Tibial artery (tissue), 4 donors: ENCODE measurements at regions of chr13 and their contacts with region 1.

Region 1: DNA sequence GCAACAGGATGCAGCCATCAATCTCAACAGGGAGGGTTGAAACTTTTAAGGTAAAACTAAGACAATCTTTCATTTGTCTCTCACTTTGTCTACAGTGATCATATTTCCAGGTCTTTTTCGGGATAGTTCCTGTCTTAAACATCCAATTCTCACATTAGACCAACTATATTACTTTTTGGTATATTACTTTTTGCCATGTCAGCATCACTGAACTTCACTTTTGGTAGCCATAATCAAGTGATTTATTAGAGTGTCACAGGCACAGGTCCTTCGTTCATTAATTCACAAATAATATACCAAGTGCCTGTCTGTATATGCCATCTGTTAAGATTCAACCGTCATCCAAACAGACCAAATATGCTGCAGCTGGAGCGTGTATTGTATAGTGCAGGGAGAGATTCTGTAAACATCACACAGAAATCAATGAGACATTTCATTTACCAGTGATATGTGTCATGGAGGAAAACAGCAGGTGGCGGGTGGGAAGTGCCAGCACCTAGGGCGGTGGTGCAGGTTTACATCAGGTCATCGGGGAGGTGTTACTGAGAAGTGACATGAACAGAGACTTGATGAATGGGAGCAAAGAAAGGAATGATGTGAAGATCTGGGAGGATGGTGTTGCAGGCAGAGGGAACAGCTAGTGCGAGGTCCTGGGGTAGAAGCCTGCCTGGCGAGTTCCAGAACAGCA is 24.9 kb downstream of the ARHGEF7 start:
- DNase-seq: no peak
- H3K4me3 ChIP-seq: no peak overlapping the region
- H3K27ac ChIP-seq: no peak overlapping the region
- H3K4me1 ChIP-seq: peaks cover 0 to 31% (median 11%) of the 10 kb centered on the region in 4 donors
- H3K27me3 ChIP-seq: no peaks in the 10 kb centered on the region
- CTCF ChIP-seq: no peak

Region 2: GRCh38 chr13:110044551-110045111 is 1095.4 kb before region 1 on chr13:
- intact Hi-C with region 1: loop called (anchors 5 kb)
- DNase-seq: no peak
- H3K4me3 ChIP-seq: no peak overlapping the region
- H3K27ac ChIP-seq: no peak overlapping the region
- H3K4me1 ChIP-seq: peaks cover 0 to 24% (median 6%) of the 10 kb centered on the region in 4 donors
- H3K27me3 ChIP-seq: no peaks in the 10 kb centered on the region
- CTCF ChIP-seq: no peak